HEK293 (cell line): ENCODE measurements at regions of chr19 and their contacts with region 1.

Region 1: DNA sequence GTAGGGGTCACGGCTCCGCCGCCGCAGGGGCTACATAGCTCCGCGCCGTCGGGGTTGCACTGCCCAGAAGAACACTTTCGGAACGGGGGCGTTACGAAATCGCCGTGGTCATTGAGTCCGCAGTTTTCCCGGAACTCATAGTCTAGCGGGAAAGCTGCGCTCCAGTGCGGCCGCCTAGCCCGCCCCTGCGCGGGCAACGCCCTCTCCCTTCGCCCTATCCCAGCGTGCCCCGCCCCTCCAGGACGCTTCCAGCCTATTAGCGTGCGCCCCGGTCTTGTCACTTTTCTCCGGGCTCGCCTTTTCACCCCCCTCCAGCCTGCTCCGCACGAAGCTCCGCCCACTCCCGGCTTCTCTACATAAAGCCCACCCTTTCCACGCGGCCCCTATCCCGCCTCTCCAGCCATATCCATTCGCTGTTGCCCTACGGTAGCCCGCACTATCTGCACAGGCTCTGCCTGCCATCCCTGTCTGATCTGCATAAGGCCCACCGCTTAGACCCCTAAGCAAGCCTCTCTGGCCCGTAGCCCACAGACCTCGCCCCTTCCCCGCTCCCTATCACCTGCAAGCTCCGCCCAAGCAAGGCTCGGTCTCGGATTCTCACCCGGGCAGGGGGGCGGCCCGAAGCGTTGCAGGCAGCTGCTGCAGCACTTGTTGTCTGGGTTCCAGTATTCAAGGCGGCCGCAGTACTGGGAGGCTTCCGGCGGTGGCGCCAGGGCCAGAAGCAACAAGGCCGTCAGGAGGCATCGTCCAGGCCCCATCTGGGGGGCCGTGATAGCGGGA is 1.6 kb downstream of the IGFLR1 start:
- H3K4me3 ChIP-seq: peak overlapping the region; percentile 52
- H3K27ac ChIP-seq: peak overlapping the region; percentile 97
- H3K4me1 ChIP-seq: peaks cover 20% of the 10 kb centered on the region
- CTCF ChIP-seq: peak; percentile 99; the same call in 1 of the 2 replicates

Region 2: GRCh38 chr19:35702223-35703012 is 38.2 kb before region 1 on chr19:
- CTCF ChIA-PET with region 1: interaction called, 5 read pairs
- POLR2A ChIA-PET with region 1: interaction called, 23 read pairs
- H3K4me3 ChIP-seq: peak overlapping the region; percentile 50
- H3K27ac ChIP-seq: peak overlapping the region; percentile 56
- H3K4me1 ChIP-seq: peaks cover 6% of the 10 kb centered on the region
- CTCF ChIP-seq: peak; percentile 51; the same call in 1 of the 2 replicates

Region 3: DNA sequence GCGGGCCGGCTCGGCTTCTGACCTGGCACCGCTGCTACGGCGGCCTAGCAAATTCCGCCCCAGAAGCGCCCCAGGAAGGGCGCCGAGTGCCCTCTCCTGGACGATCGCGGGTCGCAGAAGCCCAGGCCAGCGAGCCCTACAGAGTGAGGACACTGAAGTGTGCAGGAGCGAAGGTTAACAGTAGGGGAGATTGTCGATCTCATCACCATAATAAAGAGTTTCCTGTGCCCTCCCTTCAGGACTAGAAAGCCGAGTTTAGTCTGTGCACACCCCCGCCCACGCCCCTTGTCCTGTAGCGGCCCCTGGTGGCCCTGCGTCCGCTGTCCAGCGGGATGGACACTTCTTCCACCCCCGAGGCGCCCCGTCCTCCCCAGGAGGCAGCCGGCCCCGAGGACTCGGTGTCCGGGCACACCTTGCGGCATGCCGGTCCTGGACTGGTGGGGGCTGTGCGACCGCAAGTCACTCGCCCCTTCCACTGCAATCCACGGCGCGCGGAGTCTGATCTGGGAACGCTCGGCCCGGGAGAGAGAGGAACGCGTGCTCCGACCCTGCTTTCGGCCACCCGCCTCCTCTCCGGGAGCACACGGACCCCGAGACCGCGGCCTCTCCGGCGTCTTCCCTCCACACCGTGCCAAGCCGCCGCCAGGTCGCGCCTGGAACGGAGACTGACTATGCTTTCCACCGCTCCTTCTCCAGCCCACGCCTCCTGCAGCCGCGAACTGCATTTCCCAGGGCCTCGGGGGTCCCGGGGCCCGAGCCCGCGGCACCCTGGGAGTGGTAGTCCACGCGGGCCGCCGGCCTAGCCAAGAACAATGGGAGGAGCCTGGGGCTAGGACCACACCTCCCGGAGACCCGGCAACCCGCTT is 23.6 kb before region 1 on chr19:
- CTCF ChIA-PET with region 1: interaction called, 9 read pairs
- POLR2A ChIA-PET with region 1: interaction called, 204 read pairs
- H3K4me3 ChIP-seq: peak overlapping the region; percentile 44
- H3K27ac ChIP-seq: peak overlapping the region; percentile 93
- H3K4me1 ChIP-seq: peaks cover 23% of the 10 kb centered on the region
- CTCF ChIP-seq: peak; percentile 100

Region 4: GRCh38 chr19:35757749-35758608 is 17.4 kb after region 1 on chr19 and contains the start of gene PROSER3:
- CTCF ChIA-PET with region 1: interaction called, 7 read pairs
- POLR2A ChIA-PET with region 1: interaction called, 53 read pairs
- H3K4me3 ChIP-seq: peak within 1 kb of the TSS; percentile 71
- H3K27ac ChIP-seq: peak within 1 kb of the TSS; percentile 97
- H3K4me1 ChIP-seq: peaks cover 15% of the 10 kb centered on the region
- CTCF ChIP-seq: no peak

Region 5: DNA sequence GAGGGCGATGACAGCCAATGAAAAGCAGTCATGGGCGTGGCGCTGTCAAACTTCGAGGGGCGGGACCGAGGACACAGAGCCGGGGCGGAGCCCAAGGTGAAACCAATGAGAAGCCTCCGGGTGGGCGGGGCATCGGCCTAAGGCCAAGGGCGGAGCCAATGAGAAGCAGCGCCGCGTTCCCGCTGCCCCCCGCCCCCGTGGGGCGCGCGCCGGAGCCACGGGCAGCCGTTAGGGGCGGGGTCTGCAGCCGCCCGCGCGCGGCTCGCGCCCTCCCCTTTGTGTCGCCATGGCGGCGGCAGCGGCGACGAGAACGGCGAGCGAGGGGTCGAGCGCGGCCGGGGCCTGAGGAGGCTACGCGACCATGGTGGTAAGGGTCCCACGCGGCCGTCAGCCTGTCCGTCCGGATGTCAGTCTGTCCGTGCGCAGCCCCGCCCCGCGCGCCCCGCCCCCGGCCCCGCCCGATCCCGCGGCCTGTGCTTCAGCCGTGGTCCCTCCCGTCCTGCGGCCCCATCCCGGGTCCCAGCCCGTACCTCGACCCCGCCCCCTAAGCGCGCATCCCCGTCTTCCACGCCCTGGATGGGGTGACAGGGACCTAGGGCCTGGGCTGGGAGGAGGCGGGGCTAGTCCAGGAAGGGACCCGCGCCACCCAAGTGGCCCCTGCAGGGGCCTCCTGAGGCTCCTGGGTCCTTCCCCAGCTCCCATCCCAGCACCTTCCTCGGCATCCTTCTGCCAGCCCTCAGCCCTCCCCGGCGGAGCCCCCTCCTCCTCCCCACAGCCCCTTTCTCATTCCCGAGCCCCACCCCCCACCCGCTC is 34.9 kb after region 1 on chr19 and contains the start of gene ARHGAP33:
- CTCF ChIA-PET with region 1: interaction called, 3 read pairs
- POLR2A ChIA-PET with region 1: interaction called, 39 read pairs
- H3K4me3 ChIP-seq: peak within 1 kb of the TSS; percentile 59
- H3K27ac ChIP-seq: peak within 1 kb of the TSS; percentile 48; the same call in 1 of the 2 replicates
- H3K4me1 ChIP-seq: peaks cover 24% of the 10 kb centered on the region
- CTCF ChIP-seq: no peak

Region 6: GRCh38 chr19:35790981-35791813 is 50.6 kb after region 1 on chr19:
- CTCF ChIA-PET with region 1: interaction called, 3 read pairs
- POLR2A ChIA-PET with region 1: interaction called, 13 read pairs
- H3K4me3 ChIP-seq: no peak overlapping the region
- H3K27ac ChIP-seq: peak overlapping the region; percentile 31
- H3K4me1 ChIP-seq: no peaks in the 10 kb centered on the region
- CTCF ChIP-seq: peak; percentile 83

Region 7: GRCh38 chr19:35931161-35931873 is 190.7 kb after region 1 on chr19:
- CTCF ChIA-PET with region 1: interaction called, 8 read pairs
- POLR2A ChIA-PET with region 1: interaction called, 21 read pairs
- H3K4me3 ChIP-seq: peak overlapping the region; percentile 12
- H3K27ac ChIP-seq: peak overlapping the region; percentile 33; the same call in 1 of the 2 replicates
- H3K4me1 ChIP-seq: peaks cover 11% of the 10 kb centered on the region
- CTCF ChIP-seq: peak; percentile 100